AG04449 (cell line): ENCODE measurements at regions of chr11 and their contacts with region 1.

Region 1: DNA sequence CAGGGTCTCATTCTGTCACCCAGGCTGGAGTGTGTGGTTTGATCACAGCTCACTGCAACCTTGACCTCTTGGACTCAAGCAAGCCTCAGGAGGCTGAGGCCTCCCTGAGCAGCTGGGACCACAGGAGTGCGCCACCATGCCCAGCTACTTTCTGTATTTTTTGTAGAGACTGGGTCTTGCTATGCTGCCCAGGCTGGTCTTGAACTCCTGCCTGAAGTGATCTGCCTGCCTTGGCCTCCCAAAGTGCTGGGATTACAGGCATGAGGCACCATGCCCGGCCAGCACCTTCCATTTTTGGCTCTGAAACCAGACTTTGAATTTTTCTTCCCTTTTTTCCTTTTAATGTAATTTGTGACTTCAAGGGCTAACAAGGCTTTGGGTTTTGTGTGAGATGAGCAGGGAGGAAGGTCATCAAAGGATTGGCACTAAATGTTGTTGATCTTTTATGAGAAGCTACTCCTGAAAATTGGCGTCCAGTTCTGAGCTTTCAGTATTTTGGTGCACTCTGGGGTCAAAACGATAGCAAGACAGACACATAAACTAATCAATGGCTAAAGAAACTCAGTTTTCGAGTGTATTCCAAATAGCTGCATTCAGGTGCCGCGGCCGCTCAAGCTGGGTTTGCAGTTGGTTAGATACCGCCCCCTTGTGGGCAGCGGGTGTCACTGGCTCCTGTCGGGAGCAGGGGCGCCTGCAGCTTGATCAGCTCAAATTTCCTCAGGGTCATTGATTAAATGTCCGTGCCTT is 51.9 kb upstream of the CLMP start:
- DNase-seq: no peak
- H3K4me3 ChIP-seq: no peak overlapping the region
- CTCF ChIP-seq: peak; percentile 91

Region 2: GRCh38 chr11:123093739-123094138 is 153.2 kb before region 1 on chr11:
- CTCF ChIA-PET with region 1: interaction called, 683 read pairs
- POLR2A ChIA-PET with region 1: no interaction called
- DNase-seq: no peak
- H3K4me3 ChIP-seq: no peak overlapping the region
- CTCF ChIP-seq: no peak

Region 3: GRCh38 chr11:123137431-123138224 is 109.3 kb before region 1 on chr11:
- CTCF ChIA-PET with region 1: interaction called, 13 read pairs
- POLR2A ChIA-PET with region 1: no interaction called
- DNase-seq: no peak
- H3K4me3 ChIP-seq: peak overlapping the region; percentile 25
- CTCF ChIP-seq: no peak

Region 4: GRCh38 chr11:123174196-123175183 is 72.4 kb before region 1 on chr11:
- CTCF ChIA-PET with region 1: interaction called, 22 read pairs
- POLR2A ChIA-PET with region 1: no interaction called
- DNase-seq: peak; percentile 98
- H3K4me3 ChIP-seq: no peak overlapping the region
- CTCF ChIP-seq: no peak

Region 5: GRCh38 chr11:123203934-123204333 is 43.0 kb before region 1 on chr11:
- CTCF ChIA-PET with region 1: interaction called, 24 read pairs
- POLR2A ChIA-PET with region 1: no interaction called
- DNase-seq: no peak
- H3K4me3 ChIP-seq: no peak overlapping the region
- CTCF ChIP-seq: no peak

Region 6: GRCh38 chr11:123235117-123235655 is 11.7 kb before region 1 on chr11:
- CTCF ChIA-PET with region 1: interaction called, 35 read pairs
- POLR2A ChIA-PET with region 1: no interaction called
- DNase-seq: no peak
- H3K4me3 ChIP-seq: no peak overlapping the region
- CTCF ChIP-seq: peak; percentile 45

Region 7: GRCh38 chr11:123413636-123414035 is 166.7 kb after region 1 on chr11:
- CTCF ChIA-PET with region 1: no interaction called
- POLR2A ChIA-PET with region 1: no interaction called
- DNase-seq: no peak
- H3K4me3 ChIP-seq: no peak overlapping the region
- CTCF ChIP-seq: no peak